Caco-2 (cell line): ENCODE measurements at regions of chr6 and their contacts with region 1.

Region 1: DNA sequence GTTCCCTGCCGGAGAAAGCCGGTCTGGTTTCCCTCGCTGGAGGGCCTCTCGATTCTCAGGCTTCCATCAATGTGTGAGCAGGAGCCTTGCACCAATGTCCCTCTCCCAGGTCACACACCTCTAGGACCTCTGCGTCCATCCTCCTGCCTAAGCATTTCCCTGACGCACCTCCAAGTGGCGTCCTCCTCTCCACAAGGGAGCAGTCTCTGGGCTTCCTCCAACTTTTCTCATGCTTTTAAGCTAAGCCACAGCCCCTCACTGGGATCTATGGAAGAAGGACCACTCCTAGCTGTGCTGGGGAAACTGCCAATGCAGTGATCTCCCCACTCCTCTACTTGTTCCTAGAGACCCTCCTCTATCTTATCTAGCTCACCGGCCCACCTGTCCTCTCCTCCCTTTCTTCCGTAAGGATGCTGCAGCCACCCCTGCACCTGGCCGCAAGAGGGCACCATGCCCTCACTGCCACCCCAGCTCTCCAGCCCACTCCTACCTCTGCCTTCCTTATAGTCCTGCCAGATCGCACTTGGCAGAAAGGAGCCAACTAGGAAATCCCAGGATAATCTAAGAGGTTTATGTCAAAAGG is 258.7 kb downstream of the LRFN2 start:
- DNase-seq: peak; percentile 56 to 70
- H3K4me3 ChIP-seq: no peak overlapping the region
- H3K4me3 Mint-ChIP-seq: no peak overlapping the region
- H3K27ac Mint-ChIP-seq: no peak overlapping the region
- H3K4me1 ChIP-seq: no peaks in the 10 kb centered on the region
- H3K4me1 Mint-ChIP-seq: peaks cover 8% of the 10 kb centered on the region
- H3K27me3 ChIP-seq: no peaks in the 10 kb centered on the region; the same call in 1 of the 2 replicates
- H3K27me3 Mint-ChIP-seq: peaks cover 20% of the 10 kb centered on the region
- CTCF ChIP-seq: peak; percentile 67 to 88

Region 2: GRCh38 chr6:40219799-40220198 is 108.7 kb before region 1 on chr6:
- CTCF ChIA-PET with region 1: no interaction called
- POLR2A ChIA-PET with region 1: no interaction called
- intact Hi-C with region 1: no loop called
- DNase-seq: no peak
- H3K4me3 ChIP-seq: no peak overlapping the region
- H3K4me3 Mint-ChIP-seq: no peak overlapping the region
- H3K27ac Mint-ChIP-seq: no peak overlapping the region
- H3K4me1 ChIP-seq: no peaks in the 10 kb centered on the region
- H3K4me1 Mint-ChIP-seq: no peaks in the 10 kb centered on the region
- H3K27me3 ChIP-seq: no peaks in the 10 kb centered on the region
- H3K27me3 Mint-ChIP-seq: peaks cover 6% of the 10 kb centered on the region
- CTCF ChIP-seq: no peak

Region 3: DNA sequence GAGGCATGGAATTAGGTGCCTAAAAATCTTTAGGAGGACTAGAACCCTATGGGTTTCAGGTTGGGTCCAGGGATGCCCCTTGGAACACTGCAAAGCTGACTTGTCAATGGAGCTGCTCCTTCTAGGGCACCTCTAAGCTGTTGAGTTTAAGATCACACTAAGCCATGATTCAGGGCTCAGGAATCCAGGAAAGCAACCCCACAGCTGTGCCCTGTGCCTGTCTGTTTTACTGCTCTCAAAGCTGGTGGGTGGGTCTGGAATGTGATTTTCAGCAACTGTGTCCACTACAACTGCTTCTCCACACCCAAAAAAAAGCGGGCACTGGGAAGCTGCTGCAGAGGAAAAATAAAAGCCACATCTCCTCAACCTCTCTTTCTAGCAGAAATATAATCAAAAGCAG is 83.8 kb before region 1 on chr6:
- CTCF ChIA-PET with region 1: no interaction called
- POLR2A ChIA-PET with region 1: no interaction called
- intact Hi-C with region 1: no loop called
- DNase-seq: no peak
- H3K4me3 ChIP-seq: no peak overlapping the region
- H3K4me3 Mint-ChIP-seq: no peak overlapping the region
- H3K27ac Mint-ChIP-seq: no peak overlapping the region
- H3K4me1 ChIP-seq: no peaks in the 10 kb centered on the region
- H3K4me1 Mint-ChIP-seq: no peaks in the 10 kb centered on the region
- H3K27me3 ChIP-seq: no peaks in the 10 kb centered on the region; the same call in 1 of the 2 replicates
- H3K27me3 Mint-ChIP-seq: peaks cover 6% of the 10 kb centered on the region
- CTCF ChIP-seq: no peak

Region 4: DNA sequence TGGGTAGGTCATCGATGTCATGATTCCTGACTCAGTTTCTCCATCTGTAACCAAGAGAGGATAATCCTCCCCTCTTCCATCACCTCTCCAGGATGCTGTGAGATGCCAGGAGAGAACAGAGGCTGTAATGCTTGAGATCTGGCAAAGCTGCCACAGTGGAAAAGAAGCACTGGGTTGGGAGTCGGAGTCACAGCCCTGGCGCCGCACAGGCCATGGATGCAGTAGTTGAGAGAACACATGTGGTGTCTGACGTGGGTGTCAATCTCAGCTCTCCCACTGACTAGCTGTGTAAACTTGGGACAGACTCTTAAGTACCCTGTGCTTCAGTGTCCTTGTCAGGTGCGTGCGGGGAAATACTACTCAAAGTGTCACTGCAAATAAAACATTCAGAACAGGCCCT is 211.4 kb after region 1 on chr6:
- CTCF ChIA-PET with region 1: no interaction called
- POLR2A ChIA-PET with region 1: no interaction called
- intact Hi-C with region 1: loop called (anchors 2 kb)
- DNase-seq: no peak
- H3K4me3 ChIP-seq: no peak overlapping the region
- H3K4me3 Mint-ChIP-seq: no peak overlapping the region
- H3K27ac Mint-ChIP-seq: no peak overlapping the region
- H3K4me1 ChIP-seq: no peaks in the 10 kb centered on the region
- H3K4me1 Mint-ChIP-seq: no peaks in the 10 kb centered on the region
- H3K27me3 ChIP-seq: no peaks in the 10 kb centered on the region; the same call in 1 of the 2 replicates
- H3K27me3 Mint-ChIP-seq: peaks cover 10% of the 10 kb centered on the region
- CTCF ChIP-seq: no peak

Region 5: DNA sequence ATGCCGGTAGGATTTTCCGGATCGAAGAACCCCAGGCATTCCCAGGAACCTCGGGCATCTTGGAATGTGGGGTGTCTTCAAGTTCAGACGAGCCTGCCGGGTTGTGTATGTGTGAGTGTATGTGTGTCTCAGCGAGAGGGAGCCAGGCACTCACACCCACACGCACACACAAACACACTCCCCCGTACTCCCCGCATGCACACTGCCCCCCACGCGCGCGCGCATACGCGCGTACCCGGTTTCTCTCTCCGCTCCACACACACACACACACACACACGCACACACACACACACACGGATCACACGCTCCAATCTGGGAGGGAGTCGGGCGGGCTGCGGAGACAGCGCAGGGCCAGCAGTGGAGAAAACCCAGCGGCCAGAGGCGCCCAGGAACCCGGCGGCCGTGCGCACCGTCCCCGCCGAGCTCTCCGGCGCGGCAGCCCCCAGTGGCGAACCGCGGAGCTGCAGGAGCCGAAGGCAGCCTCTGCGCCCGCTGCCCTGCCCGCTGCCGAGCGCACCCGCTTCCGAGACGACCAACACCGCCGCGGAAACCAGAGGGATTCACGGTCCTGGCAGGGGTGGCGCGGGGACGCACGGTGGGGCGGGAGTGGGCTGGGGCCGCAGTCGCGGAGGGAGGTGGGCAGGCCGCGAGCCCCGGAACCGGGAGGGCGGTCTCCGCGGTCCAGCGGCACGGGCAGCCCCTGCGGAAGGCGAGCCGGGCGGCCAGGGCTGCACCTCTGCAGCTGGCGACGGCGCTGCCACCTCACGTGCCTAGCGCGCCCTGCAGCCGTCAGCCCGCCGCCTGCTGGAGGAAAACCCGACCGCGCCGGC is 259.0 kb after region 1 on chr6 and contains the start of gene LRFN2:
- CTCF ChIA-PET with region 1: interaction called, 4 read pairs
- POLR2A ChIA-PET with region 1: no interaction called
- intact Hi-C with region 1: loop called (anchors 5 kb)
- DNase-seq: peak; percentile 57 to 85
- H3K4me3 ChIP-seq: peak within 1 kb of the TSS; percentile 39
- H3K4me3 Mint-ChIP-seq: peak within 1 kb of the TSS; percentile 82
- H3K27ac Mint-ChIP-seq: no peak within 1 kb of the TSS
- H3K4me1 ChIP-seq: no peaks in the 10 kb centered on the region; the same call in 1 of the 2 replicates
- H3K4me1 Mint-ChIP-seq: peaks cover 12% of the 10 kb centered on the region
- H3K27me3 ChIP-seq: peaks cover 3% of the 10 kb centered on the region; the same call in 1 of the 2 replicates
- H3K27me3 Mint-ChIP-seq: peaks cover 27% of the 10 kb centered on the region
- CTCF ChIP-seq: peak; percentile 72
- total RNA-seq, gene LRFN2: not detected in 2 replicates

Region 6: DNA sequence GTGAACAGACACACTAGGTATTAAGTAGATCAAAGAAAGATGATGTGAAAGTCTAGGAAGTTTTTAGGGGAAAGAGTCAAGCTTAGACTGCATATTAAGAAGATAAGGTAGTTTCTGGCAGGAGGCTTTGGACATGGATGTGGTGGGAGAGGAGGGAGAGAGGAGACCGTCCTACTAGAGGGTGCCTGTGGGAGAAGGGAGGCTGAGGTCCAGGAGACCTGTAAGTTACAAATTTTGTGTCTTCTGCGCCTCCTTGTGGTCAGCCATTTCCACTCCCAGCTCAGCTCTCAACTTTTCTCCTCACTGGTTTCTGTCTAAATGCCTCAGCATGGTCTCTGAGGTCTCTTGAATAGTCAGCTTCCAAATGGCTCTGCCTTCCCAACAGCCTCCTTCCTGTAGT is 517.1 kb after region 1 on chr6:
- CTCF ChIA-PET with region 1: interaction called, 3 read pairs
- POLR2A ChIA-PET with region 1: no interaction called
- intact Hi-C with region 1: loop called (anchors 1 kb)
- DNase-seq: peak; percentile 54 to 57
- H3K4me3 ChIP-seq: no peak overlapping the region
- H3K4me3 Mint-ChIP-seq: no peak overlapping the region
- H3K27ac Mint-ChIP-seq: no peak overlapping the region
- H3K4me1 ChIP-seq: no peaks in the 10 kb centered on the region
- H3K4me1 Mint-ChIP-seq: no peaks in the 10 kb centered on the region
- H3K27me3 ChIP-seq: no peaks in the 10 kb centered on the region; the same call in 1 of the 2 replicates
- H3K27me3 Mint-ChIP-seq: peaks cover 26% of the 10 kb centered on the region
- CTCF ChIP-seq: peak; percentile 62 to 79